ENCODE measurements at regions of chr2 and their contacts with region 1.

Region 1: GRCh38 chr2:178478439-178479274 is at the start of gene FKBP7:
- DNase-seq: peak; percentile 94
- H3K4me3 ChIP-seq: peak within 1 kb of the TSS; percentile 60
- H3K27ac ChIP-seq: peak within 1 kb of the TSS; percentile 92
- H3K4me1 ChIP-seq: peaks cover 32% of the 10 kb centered on the region
- H3K27me3 ChIP-seq: no peaks in the 10 kb centered on the region
- CTCF ChIP-seq: peak; percentile 84
- total RNA-seq, gene FKBP7: 17.1 and 18.4 TPM in 2 replicates

Region 2: GRCh38 chr2:178450774-178451525 is 27.7 kb before region 1 on chr2 and contains the starts of genes PJVK and PRKRA:
- CTCF ChIA-PET with region 1: no interaction called
- POLR2A ChIA-PET with region 1: no interaction called
- intact Hi-C with region 1: loop called (anchors 1 kb)
- DNase-seq: peak; percentile 97
- H3K4me3 ChIP-seq: peak within 1 kb of the TSS; percentile 83
- H3K27ac ChIP-seq: peak within 1 kb of the TSS; percentile 97
- H3K4me1 ChIP-seq: peaks cover 16% of the 10 kb centered on the region
- H3K27me3 ChIP-seq: no peaks in the 10 kb centered on the region
- CTCF ChIP-seq: no peak
- total RNA-seq, gene PJVK: 1.9 and 2.3 TPM in 2 replicates
- total RNA-seq, gene PRKRA: 62.6 and 66.4 TPM in 2 replicates

Region 3: GRCh38 chr2:180006781-180007579 is 1528.3 kb after region 1 on chr2 and contains the start of gene CWC22:
- CTCF ChIA-PET with region 1: no interaction called
- POLR2A ChIA-PET with region 1: no interaction called
- intact Hi-C with region 1: loop called (anchors 5 kb)
- DNase-seq: peak; percentile 95
- H3K4me3 ChIP-seq: peak within 1 kb of the TSS; percentile 62
- H3K27ac ChIP-seq: peak within 1 kb of the TSS; percentile 97
- H3K4me1 ChIP-seq: peaks cover 8% of the 10 kb centered on the region
- H3K27me3 ChIP-seq: no peaks in the 10 kb centered on the region
- CTCF ChIP-seq: no peak
- total RNA-seq, gene CWC22: 24.9 and 26.7 TPM in 2 replicates